ENCODE measurements at regions of chr6 and their contacts with region 1.

Region 1: GRCh38 chr6:153673225-153673624 is 365.8 kb upstream of the OPRM1 start:
- DNase-seq: no peak
- H3K4me3 Mint-ChIP-seq: no peak overlapping the region
- H3K27ac Mint-ChIP-seq: peak overlapping the region; percentile 74
- H3K4me1 Mint-ChIP-seq: no peaks in the 10 kb centered on the region
- H3K27me3 Mint-ChIP-seq: no peaks in the 10 kb centered on the region
- CTCF ChIP-seq: no peak

Region 2: GRCh38 chr6:153489479-153489878 is 183.7 kb before region 1 on chr6:
- CTCF ChIA-PET with region 1: no interaction called
- intact Hi-C with region 1: no loop called
- DNase-seq: no peak
- H3K4me3 Mint-ChIP-seq: no peak overlapping the region
- H3K27ac Mint-ChIP-seq: no peak overlapping the region
- H3K4me1 Mint-ChIP-seq: no peaks in the 10 kb centered on the region
- H3K27me3 Mint-ChIP-seq: no peaks in the 10 kb centered on the region
- CTCF ChIP-seq: no peak

Region 3: GRCh38 chr6:153634416-153634815 is 38.8 kb before region 1 on chr6:
- CTCF ChIA-PET with region 1: no interaction called
- intact Hi-C with region 1: loop called (anchors 2 kb)
- DNase-seq: no peak
- H3K4me3 Mint-ChIP-seq: no peak overlapping the region
- H3K27ac Mint-ChIP-seq: no peak overlapping the region
- H3K4me1 Mint-ChIP-seq: no peaks in the 10 kb centered on the region
- H3K27me3 Mint-ChIP-seq: no peaks in the 10 kb centered on the region
- CTCF ChIP-seq: no peak

Region 4: DNA sequence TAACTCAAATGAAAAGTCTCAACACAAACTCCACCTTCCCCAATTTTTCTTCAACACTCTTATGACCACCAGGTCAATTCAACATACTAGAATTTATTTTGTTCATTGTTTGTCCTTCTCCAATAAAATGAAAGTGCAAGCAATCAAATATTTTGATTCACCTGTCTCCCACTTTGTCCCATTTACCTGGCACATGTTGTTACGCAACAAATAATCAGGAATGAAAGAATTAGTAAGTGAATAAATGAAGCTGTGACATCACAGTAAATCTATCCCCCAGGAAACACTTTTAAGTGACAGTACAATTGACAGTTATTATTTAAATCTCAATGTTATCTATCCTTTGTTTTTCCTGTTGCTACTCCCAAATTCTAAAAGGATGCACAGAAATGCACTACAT is 27.9 kb before region 1 on chr6:
- CTCF ChIA-PET with region 1: no interaction called
- intact Hi-C with region 1: no loop called
- DNase-seq: no peak
- H3K4me3 Mint-ChIP-seq: no peak overlapping the region
- H3K27ac Mint-ChIP-seq: no peak overlapping the region
- H3K4me1 Mint-ChIP-seq: peaks cover 14% of the 10 kb centered on the region
- H3K27me3 Mint-ChIP-seq: no peaks in the 10 kb centered on the region
- CTCF ChIP-seq: no peak

Measured in Calu3 (cell line).